Activated CD8-positive, alpha-beta memory T cell treated with anti-CD3 and anti-CD28 coated beads, Interleukin-2, amount 10 ng/mL, durations not matched to agents 7 days and 5 days (primary cell): ENCODE measurements at regions of chr18 and their contacts with region 1.

Region 1: DNA sequence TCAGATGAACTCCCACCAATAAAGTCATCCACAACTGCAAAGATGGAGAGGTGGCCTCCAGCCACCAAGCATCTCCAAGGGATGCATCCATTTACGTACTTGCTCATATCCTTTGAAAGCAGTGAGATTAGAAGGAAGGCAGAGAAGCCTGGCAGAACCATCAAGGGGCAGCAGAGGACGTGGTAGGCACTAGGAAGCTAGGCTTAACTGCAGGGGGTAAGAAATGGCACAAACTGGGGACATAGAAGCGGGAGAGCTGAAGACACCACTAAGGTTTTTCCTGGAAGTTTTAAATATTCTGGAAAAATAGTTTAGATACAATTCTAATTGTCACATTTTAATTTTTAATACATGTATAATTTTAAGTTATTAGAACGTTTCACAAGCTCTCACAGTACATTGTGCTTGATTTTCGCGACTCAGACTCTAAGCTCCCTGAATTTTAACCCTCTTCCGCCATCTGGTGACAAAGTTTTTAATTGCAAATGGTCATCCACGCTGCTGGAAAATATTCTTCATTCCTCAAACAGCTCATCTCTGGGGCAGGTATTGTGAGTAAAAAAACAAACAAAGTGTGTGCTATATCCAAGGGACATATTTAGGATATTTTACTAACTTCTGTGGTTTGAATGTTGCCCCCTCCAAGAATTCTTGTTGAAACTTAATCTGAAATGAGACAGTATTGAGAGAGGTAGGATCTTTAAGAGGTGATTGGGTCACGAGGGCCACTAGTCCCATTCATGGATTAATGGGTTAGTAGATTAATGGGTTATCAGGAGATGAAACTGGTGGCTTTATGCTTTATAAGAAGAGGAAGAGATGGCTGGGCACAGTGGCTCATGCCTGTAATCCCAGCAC is 1.6 kb upstream of the PSTPIP2 start:
- DNase-seq: peak; percentile 59
- ATAC-seq: peak; percentile 58
- H3K4me3 Mint-ChIP-seq: no peak overlapping the region
- H3K27ac Mint-ChIP-seq: peak overlapping the region; percentile 33
- H3K4me1 Mint-ChIP-seq: peaks cover 29% of the 10 kb centered on the region
- H3K27me3 Mint-ChIP-seq: peaks cover 6% of the 10 kb centered on the region

Region 2: DNA sequence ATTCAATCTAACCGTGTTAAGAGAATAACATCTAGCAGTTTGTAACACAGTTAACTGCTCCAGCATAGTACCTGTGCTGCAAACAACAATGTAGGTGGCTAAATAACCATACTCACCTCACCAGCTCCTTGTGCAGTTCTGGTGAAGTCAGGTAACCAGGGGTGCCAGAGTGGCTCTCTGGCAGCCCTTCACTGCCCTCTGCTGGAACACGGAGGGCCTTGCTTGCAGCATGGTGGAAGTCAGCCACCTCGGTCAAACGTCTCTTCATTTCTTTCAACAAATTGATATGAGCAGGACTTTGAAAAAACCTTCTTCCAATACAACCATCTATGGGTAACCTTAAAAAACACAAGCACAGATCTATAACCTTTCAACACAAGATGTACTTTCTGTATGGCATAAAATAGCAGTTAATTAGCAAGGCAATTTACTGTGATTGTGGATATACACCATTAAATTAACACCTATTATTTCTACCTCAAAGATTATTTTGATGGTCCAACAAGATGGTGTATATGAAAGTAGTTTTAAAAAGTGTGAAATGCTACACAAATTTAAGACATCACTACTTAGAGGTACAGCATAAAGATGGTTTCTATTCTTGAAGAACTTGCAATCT is 163.2 kb before region 1 on chr18:
- CTCF ChIA-PET with region 1: interaction called, 14 read pairs
- DNase-seq: peak; percentile 75
- ATAC-seq: peak; percentile 84
- H3K4me3 Mint-ChIP-seq: no peak overlapping the region
- H3K27ac Mint-ChIP-seq: no peak overlapping the region
- H3K4me1 Mint-ChIP-seq: no peaks in the 10 kb centered on the region
- H3K27me3 Mint-ChIP-seq: no peaks in the 10 kb centered on the region

Region 3: DNA sequence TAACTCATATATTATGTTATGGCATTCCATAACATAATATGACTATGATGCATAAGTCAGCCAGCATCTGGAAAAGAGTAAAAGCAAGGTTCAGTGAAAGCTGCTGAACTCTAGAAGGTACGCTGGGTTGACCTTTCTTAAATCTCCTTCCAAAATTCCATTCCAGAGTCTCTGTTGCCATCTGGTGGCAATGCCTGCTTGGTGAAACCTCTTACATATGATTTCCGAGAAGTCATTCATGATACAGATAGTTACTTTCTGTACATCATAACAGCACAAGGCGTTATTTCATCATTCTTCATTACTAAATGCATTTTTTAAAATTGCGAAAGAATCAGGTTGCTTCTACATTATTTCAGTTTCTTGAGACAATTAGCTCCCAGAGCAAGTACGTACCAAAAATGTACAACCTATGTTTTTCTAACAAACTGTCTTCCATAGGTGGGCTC is 99.6 kb before region 1 on chr18:
- CTCF ChIA-PET with region 1: interaction called, 50 read pairs
- DNase-seq: peak; percentile 85
- ATAC-seq: peak; percentile 91
- H3K4me3 Mint-ChIP-seq: peak overlapping the region; percentile 13
- H3K27ac Mint-ChIP-seq: peak overlapping the region; percentile 62
- H3K4me1 Mint-ChIP-seq: peaks cover 8% of the 10 kb centered on the region
- H3K27me3 Mint-ChIP-seq: no peaks in the 10 kb centered on the region

Region 4: GRCh38 chr18:46054956-46055837 is 18.5 kb before region 1 on chr18:
- CTCF ChIA-PET with region 1: interaction called, 30 read pairs
- DNase-seq: no peak
- ATAC-seq: peak; percentile 86
- H3K4me3 Mint-ChIP-seq: peak overlapping the region; percentile 20
- H3K27ac Mint-ChIP-seq: peak overlapping the region; percentile 85
- H3K4me1 Mint-ChIP-seq: peaks cover 29% of the 10 kb centered on the region
- H3K27me3 Mint-ChIP-seq: no peaks in the 10 kb centered on the region

Region 5: DNA sequence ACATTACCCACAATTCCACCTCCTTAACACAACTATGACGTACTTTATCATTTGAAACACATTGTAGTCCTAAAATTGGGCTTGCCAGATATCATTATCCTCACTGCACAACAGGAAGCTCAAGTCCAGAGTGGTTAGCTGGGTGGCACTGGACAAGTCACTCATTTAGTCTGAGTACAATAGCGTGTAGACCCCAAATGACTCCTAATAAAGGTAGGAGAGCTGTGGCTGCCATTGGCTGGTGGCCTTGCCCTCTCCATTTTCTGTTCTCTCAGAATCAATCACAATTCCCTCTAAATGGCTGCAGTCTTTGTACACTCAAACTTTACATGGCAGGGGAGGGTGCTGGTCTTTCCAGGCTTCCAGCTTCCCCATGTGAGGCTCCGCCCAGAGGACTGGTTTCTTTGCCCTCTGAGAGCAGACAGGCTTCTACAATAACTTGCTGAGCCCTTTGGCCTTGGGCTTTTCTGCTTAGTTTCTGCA is 13.3 kb before region 1 on chr18:
- CTCF ChIA-PET with region 1: interaction called, 30 read pairs
- DNase-seq: no peak
- ATAC-seq: no peak
- H3K4me3 Mint-ChIP-seq: no peak overlapping the region
- H3K27ac Mint-ChIP-seq: no peak overlapping the region
- H3K4me1 Mint-ChIP-seq: peaks cover 21% of the 10 kb centered on the region
- H3K27me3 Mint-ChIP-seq: no peaks in the 10 kb centered on the region